Activated CD4-positive, alpha-beta memory T cell treated with anti-CD3 and anti-CD28 coated beads for 36 hours (primary cell): ENCODE measurements at regions of chr3 and their contacts with region 1.

Region 1: GRCh38 chr3:23805633-23806533 is at the start of gene UBE2E1:
- DNase-seq: peak; percentile 73
- H3K4me3 Mint-ChIP-seq: peak within 1 kb of the TSS; percentile 89
- H3K27ac Mint-ChIP-seq: peak within 1 kb of the TSS; percentile 89
- H3K4me1 Mint-ChIP-seq: peaks cover 38% of the 10 kb centered on the region
- H3K27me3 Mint-ChIP-seq: peaks cover 2% of the 10 kb centered on the region
- total RNA-seq, gene UBE2E1: 82.8 to 84.8 TPM

Region 2: GRCh38 chr3:23916886-23917678 is 111.2 kb after region 1 on chr3 and contains the starts of genes NKIRAS1 and RPL15:
- CTCF ChIA-PET with region 1: no interaction called
- POLR2A ChIA-PET with region 1: interaction called, 21 read pairs
- intact Hi-C with region 1: loop called (anchors 2 kb)
- DNase-seq: peak; percentile 98
- H3K4me3 Mint-ChIP-seq: peak within 1 kb of the TSS; percentile 98
- H3K27ac Mint-ChIP-seq: peak within 1 kb of the TSS; percentile 100
- H3K4me1 Mint-ChIP-seq: peaks cover 51% of the 10 kb centered on the region
- H3K27me3 Mint-ChIP-seq: peaks cover 6% of the 10 kb centered on the region
- total RNA-seq, gene NKIRAS1: 3.9 TPM
- total RNA-seq, gene RPL15: 2,597 to 2,603 TPM

Region 3: DNA sequence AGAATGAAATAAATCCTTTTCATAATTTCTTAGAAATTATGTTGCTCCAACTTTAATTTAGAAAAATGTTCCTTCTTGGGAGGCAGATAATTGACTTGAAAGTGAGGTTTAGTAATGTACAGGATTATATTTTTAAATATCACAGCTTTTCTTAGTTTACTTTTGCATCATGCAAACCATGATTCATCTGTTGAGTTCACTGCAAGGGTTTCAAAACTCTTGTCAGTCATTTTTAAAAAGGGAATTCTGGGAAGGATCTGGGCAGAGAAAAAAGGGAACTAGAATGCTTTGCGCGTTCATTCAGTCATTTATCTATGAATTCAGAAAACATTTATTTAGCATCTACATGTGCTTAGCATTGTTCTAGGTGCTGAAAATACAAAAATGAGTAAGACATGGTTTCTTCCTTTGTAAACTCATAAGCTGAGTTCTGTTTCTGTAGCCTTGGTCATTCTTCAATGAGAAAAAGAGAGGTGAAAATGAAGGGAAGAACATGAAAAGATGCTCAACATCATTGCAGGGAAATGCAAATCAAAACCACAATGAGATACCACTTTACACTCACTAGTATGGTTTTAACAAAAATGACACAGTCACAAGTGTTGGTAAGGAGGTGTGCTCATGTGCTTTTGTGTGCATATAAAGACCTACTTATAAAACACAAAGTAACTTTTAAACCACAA is 348.3 kb after region 1 on chr3:
- CTCF ChIA-PET with region 1: no interaction called
- POLR2A ChIA-PET with region 1: no interaction called
- intact Hi-C with region 1: loop called (anchors 10 kb)
- DNase-seq: no peak
- H3K4me3 Mint-ChIP-seq: no peak overlapping the region
- H3K27ac Mint-ChIP-seq: peak overlapping the region; percentile 64
- H3K4me1 Mint-ChIP-seq: peaks cover 27% of the 10 kb centered on the region
- H3K27me3 Mint-ChIP-seq: peaks cover 3% of the 10 kb centered on the region